Activated naive CD4-positive, alpha-beta T cell treated with anti-CD3 and anti-CD28 coated beads for 36 hours (primary cell): ENCODE measurements at regions of chr15 and their contacts with region 1.

Region 1: DNA sequence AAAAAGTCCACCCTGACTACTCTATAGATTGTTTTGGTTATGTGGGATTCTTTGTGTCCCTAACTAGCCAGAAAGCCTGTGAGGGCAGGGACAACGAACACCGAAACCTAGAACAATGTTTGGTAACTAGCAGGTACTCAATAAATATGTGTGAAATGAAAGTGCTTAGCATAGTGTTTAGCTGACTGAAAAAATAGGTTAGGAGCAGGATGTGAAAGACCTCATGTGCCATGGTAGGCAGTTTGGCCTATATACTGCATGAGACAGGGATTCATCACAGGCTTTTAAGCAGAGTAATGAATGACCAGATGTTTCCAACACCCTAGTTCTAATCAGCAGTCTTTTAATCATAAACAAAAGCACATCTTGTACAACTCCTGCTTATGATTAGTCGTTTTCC is 64.2 kb downstream of the MYO5A start:
- DNase-seq: peak; percentile 20
- H3K4me3 Mint-ChIP-seq: no peak overlapping the region
- H3K27ac Mint-ChIP-seq: peak overlapping the region; percentile 43
- H3K4me1 Mint-ChIP-seq: peaks cover 31% of the 10 kb centered on the region
- H3K27me3 Mint-ChIP-seq: no peaks in the 10 kb centered on the region

Region 2: GRCh38 chr15:52445553-52445952 is 18.9 kb before region 1 on chr15:
- CTCF ChIA-PET with region 1: no interaction called
- intact Hi-C with region 1: no loop called
- DNase-seq: no peak
- H3K4me3 Mint-ChIP-seq: no peak overlapping the region
- H3K27ac Mint-ChIP-seq: peak overlapping the region; percentile 7
- H3K4me1 Mint-ChIP-seq: peaks cover 15% of the 10 kb centered on the region
- H3K27me3 Mint-ChIP-seq: no peaks in the 10 kb centered on the region

Region 3: GRCh38 chr15:52481915-52482314 is 17.4 kb after region 1 on chr15:
- CTCF ChIA-PET with region 1: interaction called, 11 read pairs
- intact Hi-C with region 1: no loop called
- DNase-seq: peak; percentile 55
- H3K4me3 Mint-ChIP-seq: no peak overlapping the region
- H3K27ac Mint-ChIP-seq: no peak overlapping the region
- H3K4me1 Mint-ChIP-seq: peaks cover 47% of the 10 kb centered on the region
- H3K27me3 Mint-ChIP-seq: no peaks in the 10 kb centered on the region

Region 4: DNA sequence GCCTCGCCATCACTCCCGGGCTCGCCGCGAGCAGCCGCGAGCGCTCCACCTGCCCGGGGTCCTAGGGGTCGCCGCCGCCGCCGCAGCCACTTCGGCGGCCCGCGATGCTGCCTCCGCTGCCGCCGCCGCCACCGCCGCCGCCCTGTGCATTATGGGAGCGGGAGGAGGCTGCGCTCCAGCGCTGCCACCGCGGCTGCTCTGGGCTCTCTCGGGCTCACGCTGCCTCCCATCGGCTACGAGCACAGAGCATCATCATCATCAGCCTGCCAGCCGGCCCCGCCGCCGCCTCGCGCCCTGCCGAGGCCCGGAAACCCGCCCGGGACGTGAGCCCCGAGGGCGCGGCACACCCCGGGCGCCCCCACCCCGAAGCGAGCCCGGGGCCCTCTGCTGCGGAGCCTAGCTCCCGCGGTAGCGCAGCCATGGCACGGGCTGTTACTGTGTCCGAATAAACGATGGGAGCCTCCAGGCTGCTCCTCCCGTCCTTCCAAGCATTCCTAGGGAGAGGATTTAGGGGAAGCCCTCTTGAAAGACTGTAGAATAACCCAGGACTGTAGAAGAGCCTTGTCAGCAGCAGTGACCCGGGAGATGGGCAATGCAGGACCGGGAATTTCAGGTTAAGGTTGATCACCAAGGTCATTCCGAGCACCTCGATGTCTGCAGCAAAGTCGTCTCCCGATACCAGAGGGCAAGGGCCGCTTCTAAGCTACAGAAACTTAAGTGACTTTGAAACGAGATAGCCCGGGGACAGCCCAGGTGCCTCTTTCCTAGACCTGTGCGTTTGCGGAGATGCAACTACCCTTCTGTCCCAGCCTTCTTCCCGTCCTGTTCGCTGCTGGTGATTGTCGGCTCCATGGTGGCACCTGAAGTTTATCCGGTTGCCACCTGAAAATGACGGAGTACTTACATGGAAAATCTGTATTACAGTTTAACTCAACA is 64.8 kb after region 1 on chr15:
- CTCF ChIA-PET with region 1: no interaction called
- intact Hi-C with region 1: loop called (anchors 2 kb)
- DNase-seq: peak; percentile 81
- H3K4me3 Mint-ChIP-seq: peak overlapping the region; percentile 74
- H3K27ac Mint-ChIP-seq: peak overlapping the region; percentile 47
- H3K4me1 Mint-ChIP-seq: peaks cover 13% of the 10 kb centered on the region
- H3K27me3 Mint-ChIP-seq: no peaks in the 10 kb centered on the region

Region 5: GRCh38 chr15:52730173-52730572 is 265.7 kb after region 1 on chr15:
- CTCF ChIA-PET with region 1: no interaction called
- intact Hi-C with region 1: loop called (anchors 5 kb)
- DNase-seq: peak; percentile 73
- H3K4me3 Mint-ChIP-seq: no peak overlapping the region
- H3K27ac Mint-ChIP-seq: peak overlapping the region; percentile 57
- H3K4me1 Mint-ChIP-seq: peaks cover 38% of the 10 kb centered on the region
- H3K27me3 Mint-ChIP-seq: no peaks in the 10 kb centered on the region